ENCODE measurements at regions of chr19 and their contacts with region 1.

Region 1: DNA sequence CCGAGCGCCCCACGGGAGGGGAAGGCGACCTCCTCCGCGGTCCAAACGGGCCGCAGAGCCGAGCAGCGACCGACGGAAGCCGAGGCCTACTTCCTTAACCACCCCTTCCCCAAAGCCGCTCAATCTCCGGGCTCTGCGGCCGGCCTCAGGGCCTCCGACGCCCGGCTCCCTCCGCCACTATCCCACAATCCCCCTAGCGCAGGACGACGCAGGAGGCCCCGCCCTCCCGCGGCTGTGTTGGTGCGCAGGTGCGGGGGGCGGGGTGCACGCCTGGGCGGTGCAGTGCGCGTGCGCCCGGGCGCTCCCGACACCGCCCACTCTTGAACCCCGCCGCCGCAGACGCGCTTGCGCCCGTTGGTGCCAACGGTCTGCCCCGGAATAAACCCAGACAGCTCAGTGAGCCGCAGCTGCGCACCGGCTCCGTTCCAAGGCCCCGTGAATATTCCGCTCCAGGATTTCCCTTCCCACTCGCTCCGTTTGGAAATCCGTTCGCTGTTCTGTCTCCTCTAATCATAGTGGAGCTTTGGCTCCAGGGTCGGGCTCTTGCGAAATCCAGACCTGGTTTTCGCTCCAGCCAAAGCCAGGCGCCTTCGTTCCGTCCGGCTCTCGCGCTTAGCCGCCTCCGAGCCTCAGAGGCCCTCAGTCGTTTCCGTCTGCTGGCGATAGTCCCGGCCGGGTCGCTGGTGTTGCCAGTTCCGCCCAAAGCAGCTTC is at the start of gene PPP6R1:
- DNase-seq: peak; percentile 93 to 97 (median 96)
- H3K4me3 ChIP-seq: peak within 1 kb of the TSS; percentile 59 to 100 (median 94)
- H3K27ac ChIP-seq: peak within 1 kb of the TSS; percentile 76 to 99 (median 95)
- H3K27me3 ChIP-seq: no peaks in the 10 kb centered on the region
- CTCF ChIP-seq: peak in 26 of 56 donors; percentile 9 to 55 (median 22)
- total RNA-seq, gene PPP6R1: 67.4 to 169 (median 95.4) TPM

Region 2: GRCh38 chr19:55117636-55118391 is 141.2 kb before region 1 on chr19 and contains the start of gene PPP1R12C:
- intact Hi-C with region 1: loop called in 1 of 2 experiments (anchors 1 kb)
- DNase-seq: peak; percentile 98 to 100 (median 99)
- H3K4me3 ChIP-seq: peak within 1 kb of the TSS; percentile 58 to 93 (median 84)
- H3K27ac ChIP-seq: peak within 1 kb of the TSS in 57 of 59 donors; percentile 12 to 92 (median 82)
- H3K27me3 ChIP-seq: no peaks in the 10 kb centered on the region
- CTCF ChIP-seq: peak in 44 of 56 donors; percentile 11 to 68 (median 39)
- total RNA-seq, gene PPP1R12C: 105 to 212 (median 148) TPM

Region 3: GRCh38 chr19:55178781-55179599 is 80.0 kb before region 1 on chr19:
- intact Hi-C with region 1: loop called in 1 of 2 experiments (anchors 10 kb)
- DNase-seq: peak; percentile 79 to 95 (median 90)
- H3K4me3 ChIP-seq: peak overlapping the region; percentile 49 to 81 (median 68)
- H3K27ac ChIP-seq: peak overlapping the region in 51 of 59 donors; percentile 0 to 90 (median 66)
- H3K27me3 ChIP-seq: peaks cover 0 to 60% (median 23%) of the 10 kb centered on the region in 45 donors
- CTCF ChIP-seq: no peak

Region 4: DNA sequence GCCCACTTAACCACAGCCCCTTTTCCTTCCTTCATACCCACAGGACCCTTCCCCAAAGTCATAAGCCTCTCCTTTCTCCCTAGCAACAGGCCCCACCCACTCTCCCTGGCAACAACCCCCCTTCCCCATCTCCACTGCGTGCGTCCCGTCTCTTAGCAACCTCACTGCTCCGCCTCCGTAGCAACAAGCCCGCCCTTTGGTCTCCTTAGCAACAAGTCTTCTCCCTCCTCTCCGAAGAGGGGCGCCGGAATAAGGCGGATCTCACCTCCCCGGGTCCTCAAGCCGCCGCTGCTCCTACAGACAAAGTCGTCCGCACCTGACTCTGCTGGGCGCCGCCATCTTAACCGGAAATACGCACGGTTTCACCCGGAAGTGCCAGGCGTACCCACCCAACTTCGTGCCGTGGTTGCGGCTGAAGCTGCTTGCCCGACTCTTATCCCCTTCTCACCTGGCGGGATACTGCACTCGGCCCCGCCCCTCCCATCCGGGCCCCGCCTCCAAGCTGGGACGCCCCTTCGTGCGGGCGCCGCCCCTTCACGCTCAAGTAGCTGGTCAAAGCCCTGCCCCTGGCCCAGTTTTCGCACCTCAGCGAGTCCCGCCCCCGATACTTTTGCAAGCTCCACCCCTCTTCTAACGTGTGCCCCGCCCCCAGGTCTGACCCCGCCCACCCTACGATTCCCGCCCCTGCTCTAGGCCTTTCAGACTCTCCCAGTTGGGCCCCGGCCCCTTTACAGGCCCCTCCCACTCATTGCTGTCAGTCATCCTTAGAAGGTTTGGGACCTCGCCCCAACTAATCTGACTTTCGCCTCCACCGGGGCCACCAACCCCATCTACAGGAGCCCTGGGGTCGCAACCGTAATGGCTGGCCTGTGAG is 21.0 kb after region 1 on chr19 and contains the start of gene HSPBP1:
- intact Hi-C with region 1: loop called in 1 of 2 experiments (anchors 1 kb)
- DNase-seq: peak; percentile 87 to 95 (median 92)
- H3K4me3 ChIP-seq: peak within 1 kb of the TSS; percentile 56 to 94 (median 78)
- H3K27ac ChIP-seq: peak within 1 kb of the TSS; percentile 55 to 98 (median 91)
- H3K27me3 ChIP-seq: no peaks in the 10 kb centered on the region
- CTCF ChIP-seq: peak in 10 of 56 donors; percentile 7 to 39 (median 12)
- total RNA-seq, gene HSPBP1: 32.1 to 75.7 (median 48.3) TPM

Region 5: GRCh38 chr19:55301459-55302317 is 42.7 kb after region 1 on chr19:
- intact Hi-C with region 1: loop called in 1 of 2 experiments (anchors 1 kb)
- DNase-seq: peak; percentile 80 to 90 (median 85)
- H3K4me3 ChIP-seq: peak overlapping the region in 55 of 59 donors; percentile 7 to 61 (median 41)
- H3K27ac ChIP-seq: peak overlapping the region in 57 of 59 donors; percentile 5 to 92 (median 81)
- H3K27me3 ChIP-seq: no peaks in the 10 kb centered on the region
- CTCF ChIP-seq: peak in 55 of 56 donors; percentile 97 to 100 (median 99)

Region 6: GRCh38 chr19:55319785-55320184 is 60.8 kb after region 1 on chr19:
- intact Hi-C with region 1: no loop called
- DNase-seq: peak in 9 of 10 donors; percentile 41 to 71 (median 53)
- H3K4me3 ChIP-seq: peak overlapping the region in 33 of 59 donors; percentile 2 to 57 (median 31)
- H3K27ac ChIP-seq: no peak overlapping the region
- H3K27me3 ChIP-seq: no peaks in the 10 kb centered on the region
- CTCF ChIP-seq: no peak

Measured in dorsolateral prefrontal cortex (tissue), 120 donors.